Activated CD4-positive, alpha-beta T cell treated with anti-CD3 and anti-CD28 coated beads for 36 hours (primary cell): ENCODE measurements at regions of chr7 and their contacts with region 1.

Region 1: GRCh38 chr7:43764039-43764761 is 5.7 kb downstream of the BLVRA start:
- DNase-seq: peak; percentile 80
- ATAC-seq: peak; percentile 51
- H3K4me3 Mint-ChIP-seq: peak overlapping the region; percentile 30
- H3K27ac Mint-ChIP-seq: peak overlapping the region; percentile 55
- H3K4me1 Mint-ChIP-seq: peaks cover 42% of the 10 kb centered on the region
- H3K27me3 Mint-ChIP-seq: no peaks in the 10 kb centered on the region

Region 2: GRCh38 chr7:43824963-43825362 is 60.8 kb after region 1 on chr7:
- CTCF ChIA-PET with region 1: interaction called, 5 read pairs
- POLR2A ChIA-PET with region 1: no interaction called
- intact Hi-C with region 1: loop called (anchors 5 kb)
- DNase-seq: no peak
- ATAC-seq: peak; percentile 49
- H3K4me3 Mint-ChIP-seq: no peak overlapping the region
- H3K27ac Mint-ChIP-seq: no peak overlapping the region
- H3K4me1 Mint-ChIP-seq: peaks cover 2% of the 10 kb centered on the region
- H3K27me3 Mint-ChIP-seq: peaks cover 39% of the 10 kb centered on the region

Region 3: DNA sequence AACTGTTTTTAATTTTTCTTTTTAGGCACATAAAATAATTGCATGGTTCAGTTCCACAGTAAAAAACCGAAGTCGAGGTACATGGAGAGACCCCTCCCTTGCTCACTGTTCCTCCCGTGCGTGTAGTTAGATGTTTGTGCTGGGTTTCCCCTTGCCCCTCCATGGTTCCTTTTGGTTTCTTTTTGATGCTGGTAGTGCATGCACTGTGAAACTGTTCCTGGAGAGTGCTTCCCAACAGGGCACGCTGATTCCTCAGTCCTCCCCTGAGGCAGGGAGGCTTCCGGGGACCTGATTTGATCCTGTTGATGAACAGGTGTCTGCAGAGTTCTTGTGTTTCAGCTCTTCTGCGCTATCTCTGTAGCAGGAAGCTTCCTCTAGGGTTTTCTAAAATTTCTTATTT is 1879.4 kb after region 1 on chr7:
- CTCF ChIA-PET with region 1: no interaction called
- POLR2A ChIA-PET with region 1: no interaction called
- intact Hi-C with region 1: no loop called
- DNase-seq: no peak
- ATAC-seq: no peak
- H3K4me3 Mint-ChIP-seq: no peak overlapping the region
- H3K27ac Mint-ChIP-seq: no peak overlapping the region
- H3K4me1 Mint-ChIP-seq: no peaks in the 10 kb centered on the region
- H3K27me3 Mint-ChIP-seq: peaks cover 7% of the 10 kb centered on the region